CD8-positive, alpha-beta T cell (primary cell): ENCODE measurements at regions of chr6 and their contacts with region 1.

Region 1: DNA sequence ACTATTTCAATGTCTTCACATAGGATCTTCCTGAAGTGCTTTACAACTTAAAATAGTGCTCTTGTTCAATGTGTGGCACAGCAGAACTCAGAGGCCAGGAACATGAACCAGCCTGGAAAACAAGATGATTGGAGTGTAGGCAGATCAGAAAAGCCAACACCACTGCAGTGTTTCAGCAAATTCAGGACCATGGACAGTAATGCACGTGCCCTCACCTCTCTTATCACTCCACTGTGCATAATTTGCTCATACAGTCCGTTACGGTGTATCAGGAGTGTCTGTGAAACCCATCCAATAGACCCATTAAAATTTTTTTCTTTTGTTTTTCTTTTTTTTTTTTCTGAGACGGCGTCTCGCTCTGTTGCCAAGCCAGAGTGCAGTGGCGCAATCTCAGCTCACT is 27.6 kb upstream of the HACE1 start:
- DNase-seq: peak in 2 of 9 experiments; percentile 21 to 22
- ATAC-seq: no peak
- H3K4me3 ChIP-seq: no peak overlapping the region
- H3K4me3 Mint-ChIP-seq: no peak overlapping the region
- H3K27ac ChIP-seq: no peak overlapping the region
- H3K27ac Mint-ChIP-seq: no peak overlapping the region
- H3K4me1 ChIP-seq: no peaks in the 10 kb centered on the region
- H3K4me1 Mint-ChIP-seq: no peaks in the 10 kb centered on the region
- H3K27me3 ChIP-seq: no peaks in the 10 kb centered on the region
- H3K27me3 Mint-ChIP-seq: peaks cover 10% of the 10 kb centered on the region
- CTCF ChIP-seq: no peak

Region 2: GRCh38 chr6:104689551-104690205 is 197.7 kb before region 1 on chr6:
- CTCF ChIA-PET with region 1: no interaction called
- POLR2A ChIA-PET with region 1: no interaction called
- intact Hi-C with region 1: loop called in 1 of 2 experiments (anchors 10 kb)
- DNase-seq: no peak
- ATAC-seq: no peak
- H3K4me3 ChIP-seq: no peak overlapping the region
- H3K4me3 Mint-ChIP-seq: no peak overlapping the region
- H3K27ac ChIP-seq: no peak overlapping the region
- H3K27ac Mint-ChIP-seq: no peak overlapping the region
- H3K4me1 ChIP-seq: no peaks in the 10 kb centered on the region
- H3K4me1 Mint-ChIP-seq: peaks cover 7% of the 10 kb centered on the region
- H3K27me3 ChIP-seq: no peaks in the 10 kb centered on the region
- H3K27me3 Mint-ChIP-seq: no peaks in the 10 kb centered on the region
- CTCF ChIP-seq: no peak

Region 3: GRCh38 chr6:104711371-104711770 is 176.0 kb before region 1 on chr6:
- CTCF ChIA-PET with region 1: no interaction called
- POLR2A ChIA-PET with region 1: no interaction called
- intact Hi-C with region 1: no loop called
- DNase-seq: no peak
- ATAC-seq: no peak
- H3K4me3 ChIP-seq: no peak overlapping the region
- H3K4me3 Mint-ChIP-seq: no peak overlapping the region
- H3K27ac ChIP-seq: no peak overlapping the region
- H3K27ac Mint-ChIP-seq: no peak overlapping the region
- H3K4me1 ChIP-seq: no peaks in the 10 kb centered on the region
- H3K4me1 Mint-ChIP-seq: peaks cover 2% of the 10 kb centered on the region
- H3K27me3 ChIP-seq: no peaks in the 10 kb centered on the region
- H3K27me3 Mint-ChIP-seq: no peaks in the 10 kb centered on the region
- CTCF ChIP-seq: no peak

Region 4: GRCh38 chr6:104921896-104922295 is 34.5 kb after region 1 on chr6:
- CTCF ChIA-PET with region 1: no interaction called
- POLR2A ChIA-PET with region 1: no interaction called
- intact Hi-C with region 1: no loop called
- DNase-seq: no peak
- ATAC-seq: no peak
- H3K4me3 ChIP-seq: no peak overlapping the region
- H3K4me3 Mint-ChIP-seq: no peak overlapping the region
- H3K27ac ChIP-seq: no peak overlapping the region
- H3K27ac Mint-ChIP-seq: no peak overlapping the region
- H3K4me1 ChIP-seq: no peaks in the 10 kb centered on the region
- H3K4me1 Mint-ChIP-seq: no peaks in the 10 kb centered on the region
- H3K27me3 ChIP-seq: no peaks in the 10 kb centered on the region
- H3K27me3 Mint-ChIP-seq: peaks cover 10% of the 10 kb centered on the region
- CTCF ChIP-seq: no peak